Activated CD8-positive, alpha-beta T cell treated with anti-CD3 and anti-CD28 coated beads for 36 hours (primary cell): ENCODE measurements at regions of chr11 and their contacts with region 1.

Region 1: DNA sequence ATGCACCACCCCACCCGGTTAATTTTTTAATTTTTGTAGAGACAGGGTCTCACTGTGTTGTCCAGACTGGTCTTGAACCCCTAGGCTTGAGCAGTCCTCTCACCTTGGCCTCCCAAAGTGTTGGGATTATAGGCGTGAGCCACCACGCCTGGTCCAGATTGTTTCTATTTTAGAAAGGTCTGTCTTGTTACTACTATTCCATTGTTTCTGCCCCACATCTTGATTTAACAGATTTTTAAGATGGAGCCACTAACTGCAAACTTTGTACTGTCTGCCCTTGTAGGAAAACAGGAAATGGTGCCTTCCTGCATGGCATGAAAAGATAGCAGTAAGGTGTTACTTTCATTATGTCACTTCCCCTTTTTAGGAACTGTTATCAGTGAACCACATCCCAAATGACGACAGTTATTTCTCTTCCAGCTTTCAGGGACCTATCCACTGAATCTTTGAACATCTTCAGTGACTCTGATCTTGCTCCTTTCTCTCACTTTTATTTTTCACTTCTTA is 23.2 kb downstream of the TAF1D start:
- DNase-seq: no peak
- ATAC-seq: no peak
- H3K4me3 Mint-ChIP-seq: no peak overlapping the region
- H3K27ac Mint-ChIP-seq: peak overlapping the region; percentile 41
- H3K4me1 Mint-ChIP-seq: peaks cover 16% of the 10 kb centered on the region
- H3K27me3 Mint-ChIP-seq: no peaks in the 10 kb centered on the region
- CTCF ChIP-seq: no peak

Region 2: DNA sequence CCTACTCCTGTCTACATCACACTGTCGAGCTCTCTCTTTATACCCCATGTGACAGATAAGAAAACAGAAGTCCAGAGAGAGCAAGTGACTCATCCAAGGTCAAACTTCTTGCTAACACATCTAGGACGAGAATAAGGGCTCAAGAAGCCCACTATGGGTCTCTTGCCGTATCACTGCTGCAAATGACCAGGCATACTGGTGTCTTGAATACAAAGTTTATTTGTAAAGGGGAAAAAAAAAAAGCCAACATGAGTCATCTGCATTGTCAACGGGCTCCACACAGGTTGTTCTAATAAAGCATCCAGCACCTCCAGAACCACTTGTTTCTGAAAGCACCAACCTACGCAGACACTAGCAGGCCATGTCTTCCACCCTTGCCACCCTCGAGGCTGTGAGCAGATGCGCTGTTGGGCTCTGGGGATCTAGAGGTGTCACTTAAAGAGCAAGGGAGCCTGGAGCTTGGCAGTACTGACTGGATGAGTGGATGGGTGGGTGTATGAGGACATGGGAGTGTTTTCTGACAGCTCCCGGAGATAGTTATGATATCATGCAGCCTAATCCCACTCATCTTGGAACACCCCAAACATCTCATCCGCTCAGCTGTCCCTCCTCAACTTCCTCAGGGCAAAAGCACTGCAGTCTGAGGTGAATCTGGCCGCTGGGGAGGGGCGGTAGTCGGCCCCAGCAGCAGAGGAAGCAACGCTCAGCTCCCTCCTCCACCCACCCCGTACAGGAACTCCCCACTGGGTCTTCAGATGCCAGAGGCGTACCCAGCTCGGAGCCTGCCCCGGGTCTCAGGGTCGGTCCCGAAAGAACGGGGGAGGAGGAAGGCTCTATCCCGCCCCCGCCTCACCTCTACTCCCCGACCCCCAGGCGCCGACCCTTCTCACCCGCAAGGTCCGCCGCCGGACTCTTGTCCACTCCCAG is 176.0 kb before region 1 on chr11:
- CTCF ChIA-PET with region 1: no interaction called
- POLR2A ChIA-PET with region 1: no interaction called
- intact Hi-C with region 1: no loop called
- DNase-seq: peak; percentile 44
- ATAC-seq: peak; percentile 60
- H3K4me3 Mint-ChIP-seq: peak overlapping the region; percentile 72
- H3K27ac Mint-ChIP-seq: peak overlapping the region; percentile 50
- H3K4me1 Mint-ChIP-seq: peaks cover 13% of the 10 kb centered on the region
- H3K27me3 Mint-ChIP-seq: peaks cover 13% of the 10 kb centered on the region
- CTCF ChIP-seq: no peak

Region 3: GRCh38 chr11:93727985-93728791 is 10.1 kb after region 1 on chr11:
- CTCF ChIA-PET with region 1: interaction called, 6 read pairs
- POLR2A ChIA-PET with region 1: interaction called, 51 read pairs
- intact Hi-C with region 1: no loop called
- DNase-seq: no peak
- ATAC-seq: no peak
- H3K4me3 Mint-ChIP-seq: no peak overlapping the region
- H3K27ac Mint-ChIP-seq: peak overlapping the region; percentile 48
- H3K4me1 Mint-ChIP-seq: peaks cover 11% of the 10 kb centered on the region
- H3K27me3 Mint-ChIP-seq: no peaks in the 10 kb centered on the region
- CTCF ChIP-seq: no peak

Region 4: DNA sequence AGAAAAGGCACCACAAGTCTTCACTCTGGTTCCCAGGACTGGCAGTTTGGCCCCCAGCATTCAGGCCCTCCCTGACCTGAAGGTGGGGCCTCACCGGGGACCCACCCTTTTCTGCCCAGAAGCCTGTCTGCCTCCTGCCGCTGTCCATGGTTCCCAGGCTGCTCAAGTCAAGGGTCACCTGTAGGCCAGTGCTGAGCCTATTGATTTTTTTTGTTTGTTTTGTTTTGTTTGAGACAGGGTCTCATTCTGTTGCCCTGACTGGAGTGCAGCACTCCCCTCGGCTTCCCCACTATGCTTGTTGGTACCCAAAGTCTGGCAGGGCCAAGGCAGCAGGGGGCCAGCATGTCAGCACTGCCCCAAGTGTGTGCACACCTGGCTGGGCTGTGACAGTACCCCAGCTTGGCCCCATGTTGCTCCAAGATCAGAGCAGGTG is 55.0 kb after region 1 on chr11:
- CTCF ChIA-PET with region 1: no interaction called
- POLR2A ChIA-PET with region 1: no interaction called
- intact Hi-C with region 1: no loop called
- DNase-seq: no peak
- ATAC-seq: no peak
- H3K4me3 Mint-ChIP-seq: no peak overlapping the region
- H3K27ac Mint-ChIP-seq: no peak overlapping the region
- H3K4me1 Mint-ChIP-seq: no peaks in the 10 kb centered on the region
- H3K27me3 Mint-ChIP-seq: no peaks in the 10 kb centered on the region
- CTCF ChIP-seq: no peak

Region 5: DNA sequence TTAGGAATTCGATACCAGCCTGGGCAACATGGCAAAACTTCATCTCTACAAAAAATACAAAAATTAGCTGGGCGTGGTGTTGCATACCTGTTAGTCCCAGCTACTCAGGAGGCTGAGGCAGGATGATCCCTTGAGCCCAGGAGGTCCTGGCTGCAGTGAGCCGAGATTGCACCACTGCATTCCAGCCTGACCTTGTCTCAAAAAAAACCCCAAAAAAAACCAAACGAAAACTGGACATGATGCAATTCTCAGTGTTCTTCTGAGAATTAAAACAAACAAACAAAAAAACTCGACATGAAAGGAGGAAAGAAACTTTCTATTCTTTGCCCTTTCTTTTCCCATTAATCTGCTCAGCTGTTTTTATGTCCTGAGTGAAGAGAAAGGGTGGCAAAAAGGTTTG is 73.4 kb after region 1 on chr11:
- CTCF ChIA-PET with region 1: no interaction called
- POLR2A ChIA-PET with region 1: no interaction called
- intact Hi-C with region 1: no loop called
- DNase-seq: no peak
- ATAC-seq: no peak
- H3K4me3 Mint-ChIP-seq: no peak overlapping the region
- H3K27ac Mint-ChIP-seq: no peak overlapping the region
- H3K4me1 Mint-ChIP-seq: peaks cover 22% of the 10 kb centered on the region
- H3K27me3 Mint-ChIP-seq: no peaks in the 10 kb centered on the region
- CTCF ChIP-seq: no peak